Left cardiac atrium (tissue), 4 donors: ENCODE measurements at regions of chr10 and their contacts with region 1.

Region 1: DNA sequence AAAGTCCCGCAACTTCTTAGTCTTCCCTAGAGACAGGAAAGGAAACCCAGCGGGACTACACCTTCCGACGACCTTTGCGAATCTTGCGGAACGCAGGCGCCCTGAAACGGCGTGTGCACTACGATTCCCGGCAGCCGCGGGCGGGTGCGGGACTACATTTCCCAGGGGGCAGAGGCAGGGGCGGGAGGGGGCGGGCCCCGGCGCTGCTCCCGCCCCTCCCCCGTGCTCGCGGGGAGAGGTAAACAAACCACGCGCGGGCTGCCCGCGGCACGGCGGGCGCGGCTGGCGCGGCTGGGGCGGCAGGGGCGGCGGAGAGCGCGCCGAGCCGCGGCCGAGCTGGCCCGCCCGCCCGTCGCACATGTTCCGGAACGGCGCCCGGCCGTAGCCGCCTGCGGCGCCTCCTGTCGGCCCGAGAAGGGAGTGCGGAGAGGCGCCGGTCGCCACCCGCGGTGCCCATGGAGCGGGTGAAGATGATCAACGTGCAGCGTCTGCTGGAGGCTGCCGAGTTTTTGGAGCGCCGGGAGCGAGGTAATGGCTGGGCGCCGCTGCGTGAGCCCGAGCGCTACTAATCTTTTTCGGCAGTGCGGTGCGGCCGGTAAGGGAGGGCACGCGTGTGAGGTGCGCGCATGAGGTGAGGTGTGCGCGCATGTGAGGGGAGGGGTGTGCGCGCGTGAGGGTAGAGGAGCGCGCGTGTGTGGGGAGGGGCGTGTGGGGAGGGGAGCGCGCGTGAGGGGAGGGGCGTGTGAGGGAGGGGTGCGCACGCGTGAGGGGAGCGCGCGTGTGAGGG is 18.5 kb downstream of the MXI1 start:
- DNase-seq: peak; percentile 93
- ATAC-seq: peak; percentile 65 to 69

Region 2: DNA sequence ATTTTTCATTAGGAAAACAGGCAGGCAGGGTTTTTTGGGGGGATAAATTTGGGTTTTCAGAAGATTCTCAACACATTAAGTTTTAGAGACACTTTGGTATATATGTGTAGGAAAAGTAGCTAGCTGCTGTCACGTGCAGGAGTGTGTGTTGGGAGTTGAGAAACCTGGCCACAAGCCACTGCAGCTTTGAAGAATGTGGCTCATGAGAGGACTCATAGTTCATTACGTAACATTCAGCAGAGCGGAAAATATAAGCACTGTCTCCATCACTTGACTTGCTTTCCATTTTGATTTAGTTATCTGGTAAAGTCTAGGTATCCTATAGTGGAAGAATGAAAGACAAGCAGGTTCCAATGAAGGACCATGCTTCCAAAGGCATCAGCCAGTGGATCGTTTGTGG is 47.5 kb after region 1 on chr10:
- intact Hi-C with region 1: loop called (anchors 5 kb)
- DNase-seq: peak; percentile 78
- ATAC-seq: peak; percentile 60 to 68

Region 3: DNA sequence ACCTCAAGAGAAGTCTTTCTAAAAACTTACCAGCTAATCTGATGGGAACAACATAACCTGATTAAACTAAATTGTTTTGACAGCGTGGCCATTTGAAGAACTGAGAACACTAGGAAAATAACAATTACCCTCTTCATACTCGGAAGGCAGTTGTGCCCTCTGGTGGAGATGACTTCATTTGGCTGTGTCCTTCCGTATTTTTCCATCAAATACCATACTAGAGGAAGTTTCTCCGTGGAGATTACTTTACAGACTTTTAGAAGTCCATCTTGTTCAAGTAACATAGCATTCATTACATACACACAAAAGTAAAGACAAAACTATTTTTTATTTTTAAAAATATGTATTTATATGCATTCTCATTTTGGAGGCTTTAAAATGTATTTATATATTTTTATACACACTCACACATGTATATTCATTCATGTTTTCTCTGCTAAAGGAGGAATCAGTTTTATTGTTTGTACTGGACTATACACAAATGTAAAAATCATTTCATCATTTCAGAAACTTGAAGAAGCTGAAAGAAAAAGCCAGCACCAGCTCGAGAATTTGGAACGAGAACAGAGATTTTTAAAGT is 53.5 kb after region 1 on chr10:
- intact Hi-C with region 1: loop called in 1 of 2 experiments (anchors 5 kb)
- DNase-seq: peak; percentile 45
- ATAC-seq: peak; percentile 76 to 90

Region 4: DNA sequence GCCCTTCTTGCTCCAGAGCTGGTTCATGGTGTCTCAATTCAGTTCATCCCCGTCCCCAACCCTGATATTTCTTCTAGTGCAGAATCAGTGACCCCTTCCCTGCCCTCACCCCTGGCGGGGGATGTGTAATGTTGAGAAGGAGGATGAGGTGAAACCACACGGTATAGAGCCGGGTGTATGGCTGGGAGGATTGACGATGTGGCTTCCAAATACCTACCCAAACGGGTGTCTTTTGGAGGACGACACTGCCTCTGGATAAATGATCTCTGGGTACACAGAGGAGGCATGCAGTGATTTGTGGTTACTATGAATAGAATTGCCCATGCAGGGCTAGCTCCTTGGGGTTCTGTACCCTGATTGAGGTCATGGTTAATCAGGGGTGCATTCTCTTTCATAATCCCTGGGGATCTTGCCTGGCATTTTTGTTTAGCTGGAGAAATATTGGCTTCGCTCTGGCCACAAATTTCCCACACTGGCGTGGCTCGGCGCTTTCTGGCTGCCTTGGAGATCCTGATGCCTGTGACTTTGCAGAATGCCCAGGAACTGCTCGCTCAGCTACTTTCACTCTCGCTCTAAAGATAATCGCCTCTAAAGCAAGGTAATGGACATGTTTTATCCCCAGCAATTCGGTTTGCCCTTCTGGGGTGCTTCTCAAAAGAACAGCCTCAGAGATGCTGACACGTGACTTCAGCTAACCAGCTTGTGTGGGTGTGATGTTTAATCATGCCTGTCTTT is 507.4 kb after region 1 on chr10:
- intact Hi-C with region 1: no loop called
- DNase-seq: no peak
- ATAC-seq: peak; percentile 41 to 52